PC-3 (cell line): ENCODE measurements at regions of chr4 and their contacts with region 1.

Region 1: GRCh38 chr4:151540728-151541422 is 131.9 kb downstream of the FHIP1A start:
- DNase-seq: peak; percentile 95
- ATAC-seq: peak; percentile 91
- H3K4me3 ChIP-seq: peak overlapping the region; percentile 56
- H3K27ac ChIP-seq: peak overlapping the region; percentile 100
- H3K4me1 ChIP-seq: peaks cover 37% of the 10 kb centered on the region
- H3K27me3 ChIP-seq: no peaks in the 10 kb centered on the region
- CTCF ChIP-seq: no peak

Region 2: GRCh38 chr4:151376540-151376939 is 164.3 kb before region 1 on chr4:
- CTCF ChIA-PET with region 1: no interaction called
- POLR2A ChIA-PET with region 1: no interaction called
- intact Hi-C with region 1: no loop called
- DNase-seq: no peak
- ATAC-seq: no peak
- H3K4me3 ChIP-seq: no peak overlapping the region
- H3K27ac ChIP-seq: no peak overlapping the region
- H3K4me1 ChIP-seq: no peaks in the 10 kb centered on the region
- H3K27me3 ChIP-seq: no peaks in the 10 kb centered on the region
- CTCF ChIP-seq: no peak

Region 3: GRCh38 chr4:151408630-151409469 is 132.0 kb before region 1 on chr4 and contains the start of gene FHIP1A:
- CTCF ChIA-PET with region 1: interaction called, 3 read pairs
- POLR2A ChIA-PET with region 1: no interaction called
- intact Hi-C with region 1: loop called (anchors 5 kb)
- DNase-seq: peak; percentile 96
- ATAC-seq: peak; percentile 92
- H3K4me3 ChIP-seq: peak within 1 kb of the TSS; percentile 97
- H3K27ac ChIP-seq: peak within 1 kb of the TSS; percentile 90
- H3K4me1 ChIP-seq: peaks cover 16% of the 10 kb centered on the region
- H3K27me3 ChIP-seq: no peaks in the 10 kb centered on the region
- CTCF ChIP-seq: no peak
- total RNA-seq, gene FHIP1A: 11.3 and 13.8 TPM in 2 replicates